ENCODE measurements at regions of chr16 and their contacts with region 1.

Region 1: GRCh38 chr16:21638573-21638975 is 13.8 kb downstream of the IGSF6 start:
- DNase-seq: no peak
- ATAC-seq: peak; percentile 87
- H3K4me3 ChIP-seq: no peak overlapping the region
- H3K27ac ChIP-seq: no peak overlapping the region
- H3K4me1 ChIP-seq: peaks cover 5% of the 10 kb centered on the region
- H3K27me3 ChIP-seq: no peaks in the 10 kb centered on the region
- CTCF ChIP-seq: no peak

Region 2: GRCh38 chr16:20987049-20987448 is 651.5 kb before region 1 on chr16:
- CTCF ChIA-PET with region 1: no interaction called
- POLR2A ChIA-PET with region 1: no interaction called
- in situ Hi-C with region 1: no loop called
- intact Hi-C with region 1: no loop called
- DNase-seq: no peak
- ATAC-seq: no peak
- H3K4me3 ChIP-seq: no peak overlapping the region
- H3K27ac ChIP-seq: no peak overlapping the region
- H3K4me1 ChIP-seq: no peaks in the 10 kb centered on the region
- H3K27me3 ChIP-seq: no peaks in the 10 kb centered on the region
- CTCF ChIP-seq: no peak

Region 3: GRCh38 chr16:21584817-21585216 is 53.8 kb before region 1 on chr16:
- CTCF ChIA-PET with region 1: interaction called, 8 read pairs
- POLR2A ChIA-PET with region 1: no interaction called
- in situ Hi-C with region 1: no loop called
- intact Hi-C with region 1: loop called (anchors 5 kb)
- DNase-seq: no peak
- ATAC-seq: no peak; the same call in 1 of the 2 replicates
- H3K4me3 ChIP-seq: no peak overlapping the region
- H3K27ac ChIP-seq: no peak overlapping the region
- H3K4me1 ChIP-seq: no peaks in the 10 kb centered on the region
- H3K27me3 ChIP-seq: no peaks in the 10 kb centered on the region
- CTCF ChIP-seq: no peak

Region 4: GRCh38 chr16:21619765-21620425 is 18.7 kb before region 1 on chr16:
- CTCF ChIA-PET with region 1: no interaction called
- POLR2A ChIA-PET with region 1: no interaction called
- in situ Hi-C with region 1: no loop called
- intact Hi-C with region 1: no loop called
- DNase-seq: no peak
- ATAC-seq: no peak
- H3K4me3 ChIP-seq: no peak overlapping the region
- H3K27ac ChIP-seq: no peak overlapping the region
- H3K4me1 ChIP-seq: no peaks in the 10 kb centered on the region
- H3K27me3 ChIP-seq: no peaks in the 10 kb centered on the region
- CTCF ChIP-seq: no peak